ENCODE measurements at regions of chr1 and their contacts with region 1.

Region 1: DNA sequence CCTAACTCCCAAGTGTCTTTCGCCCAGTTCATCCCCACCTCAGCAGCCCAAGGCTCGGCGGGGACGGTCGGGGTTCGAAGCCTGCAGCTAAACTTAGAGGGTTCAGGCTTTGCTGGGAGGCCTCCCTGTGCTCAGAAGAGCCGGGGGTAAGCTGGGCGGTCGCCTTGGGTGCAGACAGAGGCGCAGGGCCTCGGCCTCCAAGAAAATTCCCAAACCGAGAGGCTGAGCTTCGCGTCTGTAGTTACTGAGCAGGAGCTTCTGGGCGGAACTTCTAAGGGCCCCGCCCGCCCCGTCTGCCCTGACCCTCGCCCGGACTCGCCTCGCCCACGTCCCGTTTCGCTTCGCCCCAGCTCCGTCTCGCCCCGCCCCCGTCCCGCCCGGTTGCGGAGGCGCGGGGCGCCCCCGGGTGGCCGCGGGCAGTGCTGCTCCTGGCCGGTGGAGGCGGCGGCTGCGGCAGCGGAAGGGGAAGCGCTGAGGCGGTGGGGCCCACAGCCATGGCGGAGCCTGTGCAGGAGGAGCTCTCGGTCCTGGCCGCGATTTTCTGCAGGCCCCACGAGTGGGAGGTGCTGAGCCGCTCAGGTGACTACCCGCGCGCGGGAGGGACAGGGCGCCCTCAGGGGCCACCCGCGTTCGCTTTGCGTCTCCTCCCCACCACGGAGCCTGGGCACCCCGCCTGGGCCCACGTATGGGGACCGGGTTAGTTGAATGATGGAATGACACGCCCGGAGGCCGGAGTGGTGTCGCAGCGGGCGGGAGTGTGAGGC is at the start of gene RWDD3:
- DNase-seq: peak; percentile 97
- H3K4me3 Mint-ChIP-seq: peak within 1 kb of the TSS; percentile 91
- H3K27ac Mint-ChIP-seq: peak within 1 kb of the TSS; percentile 94
- H3K4me1 Mint-ChIP-seq: peaks cover 55% of the 10 kb centered on the region
- H3K27me3 Mint-ChIP-seq: no peaks in the 10 kb centered on the region
- CTCF ChIP-seq: peak; percentile 84
- total RNA-seq, gene RWDD3: 23.3 and 25.2 TPM in 2 replicates

Region 2: DNA sequence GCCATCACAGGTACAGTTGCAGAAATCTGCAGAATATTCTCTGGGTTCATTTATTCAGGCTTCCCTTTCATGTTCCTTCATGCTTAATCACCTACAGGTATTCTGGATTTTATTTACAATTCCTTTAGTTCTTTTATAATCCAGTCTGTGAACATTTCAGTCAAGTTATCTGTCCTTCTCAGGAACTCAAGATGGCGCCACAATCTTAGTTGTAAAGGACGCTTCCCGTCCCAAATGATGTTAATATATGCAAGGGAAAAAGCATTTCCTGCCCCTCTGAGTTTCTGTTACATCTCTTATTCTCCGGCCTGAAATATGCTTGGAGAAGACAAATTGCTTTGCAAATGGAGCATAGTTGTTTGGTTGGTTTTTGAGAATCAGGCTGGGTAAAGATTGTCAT is 711.6 kb before region 1 on chr1:
- CTCF ChIA-PET with region 1: no interaction called
- intact Hi-C with region 1: no loop called
- DNase-seq: peak; percentile 17
- H3K4me3 Mint-ChIP-seq: no peak overlapping the region
- H3K27ac Mint-ChIP-seq: no peak overlapping the region
- H3K4me1 Mint-ChIP-seq: peaks cover 30% of the 10 kb centered on the region
- H3K27me3 Mint-ChIP-seq: no peaks in the 10 kb centered on the region
- CTCF ChIP-seq: no peak

Region 3: GRCh38 chr1:94854458-94855306 is 379.2 kb before region 1 on chr1:
- CTCF ChIA-PET with region 1: interaction called, 17 read pairs
- intact Hi-C with region 1: loop called (anchors 10 kb)
- DNase-seq: peak; percentile 87
- H3K4me3 Mint-ChIP-seq: no peak overlapping the region
- H3K27ac Mint-ChIP-seq: no peak overlapping the region
- H3K4me1 Mint-ChIP-seq: no peaks in the 10 kb centered on the region
- H3K27me3 Mint-ChIP-seq: no peaks in the 10 kb centered on the region
- CTCF ChIP-seq: peak; percentile 91

Region 4: GRCh38 chr1:95058974-95059373 is 174.9 kb before region 1 on chr1:
- CTCF ChIA-PET with region 1: interaction called, 10 read pairs
- intact Hi-C with region 1: no loop called
- DNase-seq: no peak
- H3K4me3 Mint-ChIP-seq: no peak overlapping the region
- H3K27ac Mint-ChIP-seq: no peak overlapping the region
- H3K4me1 Mint-ChIP-seq: no peaks in the 10 kb centered on the region
- H3K27me3 Mint-ChIP-seq: no peaks in the 10 kb centered on the region
- CTCF ChIP-seq: no peak

Region 5: DNA sequence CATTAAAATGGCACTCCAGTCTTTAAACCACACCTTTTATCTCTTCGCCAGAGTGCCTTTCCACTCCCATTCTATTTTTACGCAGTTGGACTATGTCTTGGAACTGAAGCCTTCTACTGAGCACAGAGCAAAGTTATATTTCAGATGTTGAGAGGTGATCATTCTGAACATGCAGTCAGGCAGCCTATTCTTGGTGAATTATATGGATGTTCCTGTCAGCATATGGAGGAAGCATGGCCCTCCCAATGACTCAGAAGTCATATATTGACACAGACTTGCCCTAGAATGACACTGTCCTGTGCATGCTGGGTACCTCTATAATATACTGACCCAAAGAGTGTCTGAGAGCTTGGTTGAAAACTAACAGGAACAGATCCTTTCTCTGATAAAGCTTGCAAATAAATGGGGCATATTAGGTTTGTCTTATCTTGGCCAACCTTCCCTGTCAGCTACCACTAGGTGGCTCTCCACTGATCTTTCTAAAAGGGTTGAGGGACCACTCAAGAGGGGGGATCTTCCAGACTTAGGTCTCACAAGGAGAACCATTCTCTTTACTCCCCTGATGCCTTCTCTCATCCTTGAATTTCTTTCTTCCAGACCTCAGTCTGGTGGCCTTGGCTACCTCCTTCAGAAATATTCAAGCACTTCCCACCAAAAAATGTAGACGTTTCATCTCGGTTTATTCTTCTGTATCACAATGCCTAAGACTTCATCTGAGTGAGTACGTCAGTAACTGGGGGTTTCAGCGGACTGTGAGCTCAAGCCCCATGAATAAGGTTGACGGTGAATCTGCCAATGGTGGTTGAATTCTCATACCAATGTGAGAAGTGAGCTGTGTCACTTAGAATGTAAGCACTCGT is 149.4 kb before region 1 on chr1:
- CTCF ChIA-PET with region 1: interaction called, 22 read pairs
- intact Hi-C with region 1: no loop called
- DNase-seq: peak; percentile 22
- H3K4me3 Mint-ChIP-seq: no peak overlapping the region
- H3K27ac Mint-ChIP-seq: no peak overlapping the region
- H3K4me1 Mint-ChIP-seq: peaks cover 30% of the 10 kb centered on the region
- H3K27me3 Mint-ChIP-seq: no peaks in the 10 kb centered on the region
- CTCF ChIP-seq: peak; percentile 82

Region 6: DNA sequence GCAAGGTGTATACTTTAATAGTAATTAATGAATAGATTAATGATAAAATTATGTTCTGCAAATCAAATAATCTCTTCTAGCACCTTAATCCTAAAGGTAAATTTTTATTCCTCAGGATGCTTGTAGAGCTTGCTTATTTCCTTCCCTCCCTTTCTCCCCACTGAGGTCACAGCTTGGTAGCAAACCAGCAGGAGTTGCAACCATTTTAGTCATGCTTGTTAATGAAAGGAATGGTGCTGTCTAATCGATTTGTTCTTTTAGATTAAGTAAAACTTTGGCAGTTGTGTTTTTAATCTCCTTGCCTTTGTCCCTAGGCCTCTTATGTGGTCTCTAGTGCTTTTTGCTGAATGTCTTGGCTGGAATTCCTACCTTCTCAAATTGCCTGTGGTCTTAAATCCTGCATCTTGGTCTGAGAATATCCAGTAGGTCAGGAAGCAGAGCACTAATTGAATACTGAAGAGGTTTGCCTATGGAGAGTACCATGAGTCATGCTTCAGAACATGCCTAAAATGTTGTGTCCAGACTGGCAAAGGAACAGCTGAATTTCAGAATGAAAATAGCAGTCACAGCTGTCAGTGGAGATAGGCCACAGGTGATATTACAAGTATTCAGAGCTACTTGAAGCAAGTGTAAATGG is 36.2 kb before region 1 on chr1:
- CTCF ChIA-PET with region 1: interaction called, 7 read pairs
- intact Hi-C with region 1: loop called (anchors 5 kb)
- DNase-seq: peak; percentile 9
- H3K4me3 Mint-ChIP-seq: peak overlapping the region; percentile 17
- H3K27ac Mint-ChIP-seq: peak overlapping the region; percentile 56
- H3K4me1 Mint-ChIP-seq: peaks cover 15% of the 10 kb centered on the region
- H3K27me3 Mint-ChIP-seq: no peaks in the 10 kb centered on the region
- CTCF ChIP-seq: no peak